Heart left ventricle (tissue), 16 donors: ENCODE measurements at regions of chr10 and their contacts with region 1.

Region 1: DNA sequence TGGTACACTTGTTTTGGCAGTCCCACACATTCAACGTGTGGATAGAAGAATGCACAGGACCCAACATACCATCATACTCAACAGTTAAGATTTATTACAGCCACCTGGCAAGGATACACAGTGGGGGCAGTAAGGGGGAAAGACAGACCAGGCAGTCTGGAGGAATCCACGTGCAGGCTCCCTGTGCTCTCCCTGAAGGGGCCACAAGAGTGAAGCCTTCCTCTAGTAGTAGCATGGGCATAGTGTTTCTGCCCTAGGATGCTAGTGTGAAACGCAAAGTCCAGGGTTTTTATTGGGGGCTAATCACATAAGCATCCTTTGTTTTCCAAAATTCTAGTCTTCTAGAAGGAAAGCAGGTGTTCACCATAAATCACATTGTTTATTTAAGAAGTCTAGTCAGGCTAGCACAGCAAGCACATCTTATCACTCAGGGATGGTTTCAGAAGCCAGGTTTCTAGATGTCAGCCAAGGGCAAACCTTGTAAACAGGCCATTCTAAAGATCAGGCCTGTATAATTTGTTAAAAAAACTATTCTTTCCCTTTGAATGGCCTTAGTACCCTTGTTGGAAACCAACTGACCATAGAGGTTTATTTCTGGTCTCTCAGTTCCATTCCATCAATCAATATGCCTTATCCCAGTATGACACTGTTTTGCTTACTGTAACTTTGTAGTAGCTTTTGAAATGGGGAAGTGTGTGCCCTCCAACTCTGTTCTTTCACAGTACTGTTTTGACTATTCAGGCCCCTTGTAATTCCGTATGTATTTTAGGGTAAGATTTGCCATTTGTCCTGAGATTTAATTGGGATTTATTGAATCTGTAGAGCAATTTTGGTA is 12.4 kb upstream of the TFAM start:
- DNase-seq: no peak
- ATAC-seq: peak in 3 of 4 donors; percentile 38 to 46 (median 39)
- H3K4me3 ChIP-seq: no peak overlapping the region
- H3K27ac ChIP-seq: no peak overlapping the region
- H3K4me1 ChIP-seq: peaks cover 0 to 10% (median 0%) of the 10 kb centered on the region in 12 donors
- H3K27me3 ChIP-seq: no peaks in the 10 kb centered on the region
- CTCF ChIP-seq: no peak
- POLR2A ChIP-seq: no peak

Region 2: GRCh38 chr10:58334817-58335305 is 38.0 kb before region 1 on chr10 and contains the start of gene UBE2D1:
- intact Hi-C with region 1: loop called in 1 of 10 experiments (anchors 5 kb)
- DNase-seq: peak; percentile 90 to 95 (median 93)
- ATAC-seq: peak; percentile 86 to 98 (median 96)
- H3K4me3 ChIP-seq: peak within 1 kb of the TSS; percentile 76 to 97 (median 90)
- H3K27ac ChIP-seq: peak within 1 kb of the TSS; percentile 83 to 97 (median 92)
- H3K4me1 ChIP-seq: peaks cover 0 to 44% (median 13%) of the 10 kb centered on the region in 12 donors
- H3K27me3 ChIP-seq: no peaks in the 10 kb centered on the region
- CTCF ChIP-seq: peak in 5 of 12 donors; percentile 16 to 30 (median 21)
- POLR2A ChIP-seq: peak; percentile 46 to 95
- total RNA-seq, gene UBE2D1: 30.8 to 84.2 (median 51.1) TPM